H1 (cell line): ENCODE measurements at regions of chr20 and their contacts with region 1.

Region 1: GRCh38 chr20:9769954-9770353 is 68.9 kb downstream of the PAK5 start:
- DNase-seq: no peak
- H3K4me3 ChIP-seq: no peak overlapping the region
- H3K27ac ChIP-seq: no peak overlapping the region
- H3K4me1 ChIP-seq: no peaks in the 10 kb centered on the region
- H3K27me3 ChIP-seq: no peaks in the 10 kb centered on the region
- CTCF ChIP-seq: no peak
- EP300 ChIP-seq: no peak
- POLR2A ChIP-seq: no peak
- RAD21 ChIP-seq: no peak

Region 2: GRCh38 chr20:9792674-9793073 is 22.7 kb after region 1 on chr20:
- CTCF ChIA-PET with region 1: interaction called, 10 read pairs
- POLR2A ChIA-PET with region 1: no interaction called
- DNase-seq: no peak
- H3K4me3 ChIP-seq: no peak overlapping the region
- H3K27ac ChIP-seq: no peak overlapping the region
- H3K4me1 ChIP-seq: no peaks in the 10 kb centered on the region
- H3K27me3 ChIP-seq: no peaks in the 10 kb centered on the region
- CTCF ChIP-seq: no peak
- EP300 ChIP-seq: no peak
- POLR2A ChIP-seq: no peak
- RAD21 ChIP-seq: no peak

Region 3: GRCh38 chr20:9807136-9807535 is 37.2 kb after region 1 on chr20:
- CTCF ChIA-PET with region 1: no interaction called
- POLR2A ChIA-PET with region 1: no interaction called
- DNase-seq: no peak
- H3K4me3 ChIP-seq: no peak overlapping the region
- H3K27ac ChIP-seq: no peak overlapping the region
- H3K4me1 ChIP-seq: no peaks in the 10 kb centered on the region
- H3K27me3 ChIP-seq: no peaks in the 10 kb centered on the region
- CTCF ChIP-seq: no peak
- EP300 ChIP-seq: no peak
- POLR2A ChIP-seq: no peak
- RAD21 ChIP-seq: no peak